ENCODE measurements at regions of chr17 and their contacts with region 1.

Region 1: DNA sequence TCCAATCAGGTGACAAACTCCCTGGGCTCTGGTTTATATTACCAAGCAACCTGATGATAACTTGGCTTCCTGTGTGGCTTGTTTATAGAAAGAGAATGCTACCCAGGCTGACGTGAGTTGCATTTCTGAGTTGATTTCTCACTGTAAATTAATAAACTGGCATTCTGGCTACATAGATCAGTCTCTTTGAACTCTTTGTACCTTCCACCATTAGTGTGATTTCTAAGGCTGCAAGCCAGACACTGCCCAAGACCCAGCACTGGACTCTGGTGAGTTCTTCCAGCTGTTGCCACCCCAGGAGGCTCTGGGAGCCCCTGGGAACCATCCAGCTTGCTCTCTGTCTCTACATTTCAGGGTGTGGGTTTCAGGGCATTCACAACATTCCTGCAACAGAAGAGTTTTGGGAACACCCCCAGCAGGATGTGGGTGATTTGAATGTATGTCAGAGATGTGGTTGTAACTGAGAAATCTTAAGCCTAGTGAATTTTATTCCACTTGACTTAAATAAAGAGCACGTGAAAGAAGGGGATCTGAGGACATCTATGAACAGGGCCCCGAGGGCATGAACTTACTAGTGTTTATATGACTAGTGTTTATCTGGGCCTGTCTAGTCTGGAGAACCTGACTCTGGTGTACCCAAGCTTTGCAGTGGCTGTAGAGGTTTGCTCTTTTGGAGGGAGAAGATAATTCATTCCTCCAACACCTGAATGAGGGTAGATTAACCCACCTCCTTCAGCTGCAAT is 30.3 kb upstream of the LRRC37A start:
- DNase-seq: peak in 1 of 42 donors; percentile 41

Region 2: DNA sequence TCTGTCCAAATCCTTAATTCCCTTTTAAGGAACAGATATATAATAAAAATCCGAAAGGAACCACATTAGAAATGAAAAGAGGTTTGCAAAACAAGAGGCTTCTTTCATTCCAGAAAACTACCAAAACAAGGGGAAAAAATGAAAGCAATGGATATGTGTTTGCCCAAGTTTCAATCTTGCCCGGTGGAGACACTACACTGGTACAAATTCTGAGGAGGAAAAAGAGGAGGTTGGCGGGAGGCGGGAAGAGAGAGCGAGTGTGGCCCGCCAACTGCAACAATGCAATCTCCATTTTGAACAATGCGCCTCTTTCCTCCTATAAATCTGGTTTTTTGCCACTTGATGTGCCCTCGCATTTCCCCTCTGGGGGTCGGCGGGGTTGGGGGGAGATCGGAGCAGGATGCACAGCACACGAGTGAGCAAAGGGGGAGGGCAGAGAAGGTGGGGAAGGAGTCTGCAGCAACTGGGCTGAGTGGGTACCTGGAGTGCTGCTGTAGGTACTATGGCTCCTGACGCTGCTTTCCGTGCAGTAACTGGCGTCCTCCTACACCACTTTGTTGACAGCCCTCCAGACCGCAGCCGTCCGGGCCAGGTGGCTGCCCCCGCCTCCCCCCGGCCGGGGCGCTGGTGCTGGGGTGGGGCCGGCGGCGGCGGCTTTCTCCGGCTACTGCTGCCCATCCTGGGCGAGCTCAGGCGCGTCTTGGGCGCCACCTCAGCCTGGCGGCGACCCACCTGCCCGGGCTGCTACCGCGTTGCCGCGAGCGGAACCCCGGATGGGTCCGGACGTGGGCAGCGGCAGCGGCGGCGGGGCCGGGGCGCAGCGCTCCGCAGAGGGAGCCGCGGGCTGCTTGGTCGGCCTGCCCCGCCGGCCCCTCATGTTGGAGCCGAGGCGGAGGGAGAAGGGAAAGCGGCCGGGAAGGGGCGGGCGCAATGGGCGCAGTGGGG is 680.3 kb before region 1 on chr17:
- intact Hi-C with region 1: loop called (anchors 5 kb)
- DNase-seq: peak in 41 of 42 donors; percentile 26 to 85 (median 71)

Region 3: DNA sequence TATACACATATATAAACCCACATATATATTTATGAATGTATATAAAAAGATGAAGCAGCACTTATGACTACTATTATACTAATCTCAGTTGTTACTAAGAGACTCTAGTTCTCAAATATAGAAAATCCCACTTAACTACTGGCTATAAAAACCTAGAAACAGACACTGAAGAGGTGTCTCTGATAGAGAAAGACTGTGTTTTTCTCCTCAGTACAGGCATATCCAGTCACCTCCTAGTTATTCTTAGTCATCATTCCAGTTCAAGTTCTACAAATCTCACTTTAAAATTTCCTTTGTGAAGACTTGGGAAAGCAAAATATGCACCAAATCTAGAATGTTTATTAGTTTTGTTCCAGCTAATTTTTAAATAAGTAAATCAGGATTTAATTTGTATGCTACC is 171.6 kb before region 1 on chr17:
- intact Hi-C with region 1: no loop called
- DNase-seq: no peak